ENCODE measurements at regions of chr1 and their contacts with region 1.

Region 1: GRCh38 chr1:79587229-79587628 is 580.7 kb upstream of the ADGRL4 start:
- DNase-seq: no peak
- H3K4me3 ChIP-seq: no peak overlapping the region
- H3K27ac ChIP-seq: no peak overlapping the region
- H3K4me1 ChIP-seq: no peaks in the 10 kb centered on the region
- H3K27me3 ChIP-seq: no peaks in the 10 kb centered on the region
- CTCF ChIP-seq: no peak
- POLR2A ChIP-seq: no peak

Region 2: GRCh38 chr1:77659879-77660593 is 1927.2 kb before region 1 on chr1:
- intact Hi-C with region 1: loop called (anchors 10 kb)
- DNase-seq: no peak
- H3K4me3 ChIP-seq: no peak overlapping the region
- H3K27ac ChIP-seq: no peak overlapping the region
- H3K4me1 ChIP-seq: no peaks in the 10 kb centered on the region
- H3K27me3 ChIP-seq: no peaks in the 10 kb centered on the region
- CTCF ChIP-seq: no peak
- POLR2A ChIP-seq: no peak

Measured in breast epithelium (tissue), 4 donors.